Left cardiac atrium (tissue), 4 donors: ENCODE measurements at regions of chr9 and their contacts with region 1.

Region 1: GRCh38 chr9:31535651-31536050 is 848.8 kb upstream of the ACO1 start:
- DNase-seq: no peak
- ATAC-seq: no peak

Region 2: GRCh38 chr9:31588006-31588405 is 52.4 kb after region 1 on chr9:
- intact Hi-C with region 1: loop called in 1 of 2 experiments (anchors 10 kb)
- DNase-seq: no peak
- ATAC-seq: no peak